Posterior cingulate gyrus (tissue), 11 donors: ENCODE measurements at regions of chr9 and their contacts with region 1.

Region 1: DNA sequence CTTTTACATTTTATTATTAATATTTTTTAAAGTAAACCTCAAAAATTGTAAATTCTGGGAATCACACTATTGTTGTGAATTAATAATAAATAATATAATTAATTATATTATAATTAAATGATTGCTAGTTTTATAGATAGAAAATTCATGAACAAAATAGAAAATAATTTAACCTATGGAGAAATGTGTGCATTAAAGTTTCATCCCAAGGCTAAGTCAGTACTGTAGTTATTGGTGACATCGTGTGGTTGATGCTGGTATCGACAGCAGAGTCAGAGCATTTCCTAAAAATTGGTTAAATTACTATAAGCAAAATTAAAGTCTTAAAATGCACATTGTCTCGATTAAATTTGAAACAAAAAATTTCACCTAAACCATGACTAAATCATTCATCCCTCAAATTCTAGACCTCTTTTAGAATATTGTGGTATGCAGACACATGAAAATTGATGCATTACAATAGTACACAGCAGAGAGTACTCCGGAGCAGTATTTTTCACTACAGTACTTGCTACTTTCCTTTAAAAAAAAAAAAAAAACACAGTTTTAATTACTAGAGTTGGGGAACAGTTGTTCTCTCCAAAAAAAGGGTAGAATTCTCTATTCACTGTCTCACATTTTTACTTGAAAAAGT is 73.9 kb downstream of the RORB start:
- DNase-seq: peak in 4 of 10 donors; percentile 13 to 40 (median 24)

Region 2: GRCh38 chr9:73200694-73201452 is 1370.1 kb before region 1 on chr9:
- intact Hi-C with region 1: loop called (anchors 2 kb)
- DNase-seq: no peak

Region 3: GRCh38 chr9:73269430-73270101 is 1301.4 kb before region 1 on chr9:
- intact Hi-C with region 1: loop called (anchors 10 kb)
- DNase-seq: no peak

Region 4: DNA sequence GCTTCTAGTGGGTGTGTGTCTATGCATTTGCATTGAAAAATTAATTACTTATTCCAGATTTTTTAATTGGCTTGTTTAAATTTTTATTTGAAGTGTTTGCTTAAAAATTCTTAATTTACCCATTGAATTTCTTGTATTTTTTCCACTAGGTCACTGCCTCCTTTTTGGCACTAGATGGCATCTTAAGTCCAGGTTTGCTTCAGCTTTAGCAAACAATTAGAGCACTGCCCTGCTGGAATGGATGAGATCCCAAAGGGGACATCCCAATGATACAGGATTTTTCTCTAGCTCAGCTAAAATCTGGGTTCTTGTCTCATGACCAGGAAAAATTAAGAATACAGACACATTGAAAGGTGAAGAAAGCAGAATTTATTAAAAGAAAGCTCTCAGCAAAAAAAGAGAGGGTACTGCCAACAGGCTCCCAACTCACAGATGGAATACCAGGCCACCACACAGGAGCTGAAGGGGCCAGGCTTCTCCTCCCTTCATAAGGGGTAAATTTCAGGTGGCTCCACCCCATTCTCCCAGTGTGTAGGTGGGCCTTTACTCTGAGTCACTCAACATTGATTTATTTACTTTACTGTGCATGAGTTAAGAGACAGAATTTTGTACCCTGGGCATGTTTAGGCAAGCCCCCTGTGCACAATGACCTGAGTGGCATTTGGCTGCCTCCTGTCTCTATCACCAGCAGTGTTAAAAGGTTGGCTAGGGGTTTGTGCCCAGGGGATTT is 887.0 kb before region 1 on chr9:
- intact Hi-C with region 1: loop called (anchors 10 kb)
- DNase-seq: no peak

Region 5: GRCh38 chr9:74496819-74497747 is 73.9 kb before region 1 on chr9 and contains the start of gene RORB:
- intact Hi-C with region 1: no loop called
- DNase-seq: peak; percentile 78 to 98 (median 88)

Region 6: DNA sequence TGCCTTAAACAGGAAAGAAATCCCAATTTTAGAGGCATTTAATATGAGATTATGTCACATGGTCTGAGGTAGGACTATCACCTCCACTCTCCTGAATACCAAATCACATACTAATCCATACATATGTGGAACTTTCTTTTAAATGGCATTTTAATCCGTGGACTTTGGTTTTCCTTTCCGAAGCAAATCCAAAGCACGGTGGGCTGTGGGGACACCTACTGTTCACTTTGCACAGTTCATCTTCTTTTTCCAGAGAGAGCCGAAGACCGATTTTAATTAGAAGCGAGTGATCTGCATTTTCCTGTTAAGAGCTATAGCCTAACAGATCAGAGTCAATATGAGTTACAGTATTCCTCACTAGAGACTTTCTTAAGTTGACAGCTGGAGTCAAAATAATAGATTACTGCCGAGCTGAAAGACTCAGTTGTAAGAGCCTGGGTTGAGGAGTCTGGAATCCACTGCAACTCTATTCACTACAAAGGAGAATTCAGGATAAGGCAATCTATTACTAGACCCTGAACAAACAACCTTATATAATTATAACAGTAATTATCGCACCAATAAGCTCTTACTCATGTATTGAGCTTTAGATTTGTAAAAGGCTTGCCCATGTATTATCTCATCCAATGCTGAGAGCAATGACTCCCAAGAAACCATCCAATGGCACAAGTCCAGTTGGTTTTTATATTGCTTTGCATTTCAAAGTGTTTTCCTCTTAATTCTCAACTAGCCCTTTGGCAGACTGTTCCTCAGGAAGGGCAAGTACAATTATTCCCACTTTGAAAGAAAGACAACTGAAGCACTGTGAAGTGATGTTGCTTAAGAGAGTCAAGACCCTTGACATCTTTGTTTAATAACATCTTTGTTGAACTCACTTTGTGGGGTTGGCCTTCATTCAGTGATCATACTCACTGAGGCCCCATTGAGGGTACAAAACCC is 172.1 kb after region 1 on chr9:
- intact Hi-C with region 1: loop called (anchors 10 kb)
- DNase-seq: peak in 7 of 10 donors; percentile 37 to 91 (median 56)

Region 7: DNA sequence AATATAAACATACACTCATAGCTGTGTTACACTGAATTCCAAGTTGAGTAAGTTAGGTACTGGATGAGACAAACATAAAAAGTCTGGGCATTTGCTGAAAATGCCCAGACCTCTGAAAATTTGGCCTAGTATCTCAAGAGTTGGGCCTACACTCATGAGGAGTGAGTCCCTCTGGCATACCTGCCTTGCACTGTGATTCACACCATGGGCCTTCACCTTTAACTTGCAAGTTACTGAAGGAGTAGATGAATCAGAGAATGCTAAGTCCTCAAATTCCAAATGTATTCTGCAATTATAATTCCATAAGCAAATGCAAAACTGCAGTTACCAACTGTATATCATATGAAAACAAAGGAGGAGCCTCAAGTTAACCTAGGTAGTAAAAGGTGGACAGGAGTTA is 414.0 kb after region 1 on chr9:
- intact Hi-C with region 1: no loop called
- DNase-seq: no peak